HepG2 (cell line): ENCODE measurements at regions of chr10 and their contacts with region 1.

Region 1: DNA sequence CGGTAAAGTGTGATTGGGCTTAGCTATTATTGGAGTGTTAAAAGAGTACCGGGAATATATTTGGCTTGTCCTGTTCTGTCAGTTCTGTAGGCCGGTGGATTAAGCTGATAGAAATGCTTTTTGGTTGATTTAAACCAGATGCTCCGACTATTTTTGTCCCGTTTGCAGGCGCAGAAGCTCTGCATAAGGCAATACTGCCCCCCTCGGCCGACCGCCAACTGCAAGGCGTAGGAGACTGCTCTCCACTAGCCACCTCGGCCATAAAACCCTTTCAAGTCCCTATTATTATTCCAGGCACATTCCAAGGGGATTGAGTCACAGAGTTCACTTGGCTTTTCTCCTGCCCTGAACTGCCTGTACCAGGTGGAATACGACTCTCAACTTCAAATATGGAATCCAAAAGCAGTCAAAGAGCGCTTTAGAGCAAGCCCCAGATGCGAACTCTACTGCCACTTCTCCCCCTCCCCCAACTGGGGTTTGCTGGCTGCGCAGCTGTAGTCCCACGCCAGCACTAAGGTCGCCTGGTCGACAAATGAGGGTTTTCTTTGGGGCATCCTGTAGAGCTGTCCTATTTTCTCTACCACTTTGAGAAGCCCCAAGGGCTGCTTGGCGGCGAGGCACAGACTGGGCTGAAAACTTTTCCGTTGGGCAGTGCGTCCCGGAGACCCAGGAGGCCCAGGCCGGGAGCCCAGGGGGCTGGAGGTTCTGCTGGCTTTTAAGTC is 108.3 kb downstream of the REEP3 start:
- DNase-seq: peak; percentile 76
- ATAC-seq: peak; percentile 89
- H3K4me3 ChIP-seq: peak overlapping the region; percentile 70 to 85 (median 75)
- H3K27ac ChIP-seq: peak overlapping the region; percentile 60
- H3K4me1 ChIP-seq: peaks cover 30% of the 10 kb centered on the region
- H3K27me3 ChIP-seq: no peaks in the 10 kb centered on the region; a peak in 1 of 5 replicates
- CTCF ChIP-seq: peak; percentile 87
- EP300 ChIP-seq: no peak
- POLR2A ChIP-seq: no peak
- RAD21 ChIP-seq: peak; percentile 72

Region 2: DNA sequence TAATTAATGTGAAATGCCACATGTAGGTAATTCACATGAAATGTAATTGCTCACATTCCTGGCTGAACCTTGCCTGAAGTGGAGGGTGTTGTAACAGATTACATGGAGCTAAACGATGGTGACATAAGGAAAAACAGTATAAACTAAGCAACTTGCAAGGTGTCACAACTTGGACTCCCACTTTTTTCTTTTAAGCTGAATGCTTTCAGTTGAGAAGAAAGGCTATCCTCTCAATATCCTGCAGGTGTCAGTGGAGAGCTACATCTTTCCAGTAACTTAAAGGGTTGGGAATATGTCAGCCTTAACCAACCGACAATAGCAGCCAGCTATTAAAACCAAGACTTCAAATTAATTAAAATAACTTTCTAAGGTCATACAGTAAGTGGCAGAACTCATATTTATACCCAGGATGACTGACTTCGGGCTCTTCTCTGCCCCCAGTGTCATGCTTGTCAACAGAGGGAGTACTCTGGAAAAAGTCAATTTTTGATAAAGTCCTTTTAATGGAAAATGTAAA is 462.7 kb before region 1 on chr10:
- CTCF ChIA-PET with region 1: interaction called, 6 read pairs
- POLR2A ChIA-PET with region 1: interaction called, 7 read pairs
- in situ Hi-C with region 1: loop called (anchors 5 kb)
- intact Hi-C with region 1: loop called (anchors 1 kb)
- DNase-seq: peak; percentile 74
- ATAC-seq: peak; percentile 63
- H3K4me3 ChIP-seq: no peak overlapping the region
- H3K27ac ChIP-seq: no peak overlapping the region
- H3K4me1 ChIP-seq: no peaks in the 10 kb centered on the region
- H3K27me3 ChIP-seq: no peaks in the 10 kb centered on the region
- CTCF ChIP-seq: peak; percentile 68
- EP300 ChIP-seq: no peak
- POLR2A ChIP-seq: no peak
- RAD21 ChIP-seq: peak; percentile 36; the same call in 1 of the 2 replicates

Region 3: DNA sequence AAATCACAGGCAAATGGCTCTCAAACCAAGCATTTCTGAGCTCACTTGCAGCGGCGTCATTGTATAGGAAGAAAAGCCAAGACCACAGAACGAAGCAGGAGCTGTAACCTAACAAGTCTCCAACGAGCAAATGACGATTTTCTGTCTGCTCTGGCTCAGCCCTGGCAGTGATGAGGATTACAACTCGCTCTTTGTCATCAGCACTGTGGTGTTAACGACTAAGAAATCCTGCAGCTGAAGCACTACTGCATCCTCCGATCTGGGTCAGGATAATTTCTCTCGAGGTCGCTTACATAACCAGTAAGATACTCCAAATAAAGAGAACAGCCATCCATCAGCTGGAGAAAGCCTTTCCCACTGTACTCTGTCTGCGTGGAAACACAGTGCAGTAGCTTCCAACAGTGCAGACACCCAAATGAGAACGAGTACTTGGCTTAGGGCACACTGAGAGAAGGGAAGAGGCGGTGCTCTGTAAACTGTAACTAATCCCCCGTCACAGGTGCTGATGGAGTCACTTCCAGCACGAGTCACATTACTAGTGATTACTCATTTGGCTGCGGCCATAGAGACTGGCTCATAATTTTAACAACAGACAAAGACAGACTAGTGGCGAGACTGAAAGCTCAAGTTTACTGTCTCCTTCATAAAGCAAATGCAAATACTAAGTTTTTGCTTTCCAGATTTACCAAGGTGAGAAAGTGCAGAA is 360.6 kb before region 1 on chr10:
- CTCF ChIA-PET with region 1: no interaction called
- POLR2A ChIA-PET with region 1: interaction called, 27 read pairs
- in situ Hi-C with region 1: no loop called
- intact Hi-C with region 1: loop called (anchors 2 kb)
- DNase-seq: peak; percentile 92
- ATAC-seq: peak; percentile 95
- H3K4me3 ChIP-seq: peak overlapping the region; percentile 61 to 100 (median 79)
- H3K27ac ChIP-seq: peak overlapping the region; percentile 99
- H3K4me1 ChIP-seq: peaks cover 21% of the 10 kb centered on the region
- H3K27me3 ChIP-seq: no peaks in the 10 kb centered on the region; a peak in 2 of 5 replicates
- CTCF ChIP-seq: no peak
- EP300 ChIP-seq: no peak
- POLR2A ChIP-seq: peak; percentile 84 to 96
- RAD21 ChIP-seq: no peak

Region 4: GRCh38 chr10:63528084-63528747 is 101.3 kb before region 1 on chr10:
- CTCF ChIA-PET with region 1: no interaction called
- POLR2A ChIA-PET with region 1: no interaction called
- in situ Hi-C with region 1: no loop called
- intact Hi-C with region 1: no loop called
- DNase-seq: no peak
- ATAC-seq: no peak
- H3K4me3 ChIP-seq: no peak overlapping the region
- H3K27ac ChIP-seq: no peak overlapping the region
- H3K4me1 ChIP-seq: peaks cover 38% of the 10 kb centered on the region
- H3K27me3 ChIP-seq: no peaks in the 10 kb centered on the region
- CTCF ChIP-seq: no peak
- EP300 ChIP-seq: no peak
- POLR2A ChIP-seq: no peak
- RAD21 ChIP-seq: no peak

Region 5: DNA sequence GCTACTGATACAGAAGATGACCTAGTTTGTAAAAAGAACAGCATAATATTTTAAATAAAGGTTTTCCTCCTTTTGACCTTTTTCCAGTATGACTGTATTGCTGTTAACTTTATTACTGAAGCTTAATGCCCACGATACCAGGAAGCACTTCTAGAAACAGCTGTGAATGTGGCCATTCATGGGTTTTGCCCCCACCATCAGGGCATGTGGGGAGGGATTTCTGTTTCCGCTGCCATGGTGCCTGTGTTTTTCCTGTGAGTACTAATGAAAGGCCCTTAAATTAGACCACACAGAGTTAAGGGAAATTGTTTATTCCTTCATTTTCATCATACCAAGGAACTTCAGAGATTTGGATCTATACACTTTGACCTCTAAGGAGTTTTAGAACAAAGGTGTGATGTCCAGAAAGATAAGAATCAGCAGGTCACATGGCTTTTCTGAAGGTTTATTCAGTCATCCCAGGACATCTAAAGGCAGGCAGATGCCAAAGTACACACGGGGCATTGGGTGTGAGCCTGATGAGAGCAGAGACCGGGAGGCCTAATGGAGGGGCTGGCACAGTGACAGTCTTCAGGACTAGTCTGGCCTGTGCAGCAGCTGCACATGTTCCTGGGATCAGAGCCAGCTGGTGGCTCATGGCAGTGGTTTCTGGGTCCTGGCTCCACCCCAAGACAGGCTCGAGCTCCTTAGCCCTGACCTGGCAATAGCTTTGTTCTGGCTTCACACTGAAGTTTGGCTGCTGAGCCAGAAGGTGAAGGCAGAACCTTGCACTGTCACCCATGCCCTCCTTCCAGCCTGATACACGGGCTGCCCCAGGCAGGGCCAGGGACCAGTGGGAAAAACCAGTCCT is 82.6 kb after region 1 on chr10:
- CTCF ChIA-PET with region 1: no interaction called
- POLR2A ChIA-PET with region 1: no interaction called
- in situ Hi-C with region 1: loop called (anchors 10 kb)
- intact Hi-C with region 1: no loop called
- DNase-seq: peak; percentile 33
- ATAC-seq: peak; percentile 82
- H3K4me3 ChIP-seq: no peak overlapping the region
- H3K27ac ChIP-seq: no peak overlapping the region
- H3K4me1 ChIP-seq: peaks cover 36% of the 10 kb centered on the region
- H3K27me3 ChIP-seq: no peaks in the 10 kb centered on the region; a peak in 2 of 5 replicates
- CTCF ChIP-seq: no peak
- EP300 ChIP-seq: no peak
- POLR2A ChIP-seq: no peak
- RAD21 ChIP-seq: no peak

Region 6: GRCh38 chr10:63767138-63767801 is 137.7 kb after region 1 on chr10:
- CTCF ChIA-PET with region 1: no interaction called
- POLR2A ChIA-PET with region 1: no interaction called
- in situ Hi-C with region 1: no loop called
- intact Hi-C with region 1: loop called (anchors 2 kb)
- DNase-seq: peak; percentile 4
- ATAC-seq: no peak
- H3K4me3 ChIP-seq: no peak overlapping the region
- H3K27ac ChIP-seq: no peak overlapping the region
- H3K4me1 ChIP-seq: peaks cover 15% of the 10 kb centered on the region
- H3K27me3 ChIP-seq: no peaks in the 10 kb centered on the region
- CTCF ChIP-seq: peak; percentile 33
- EP300 ChIP-seq: no peak
- POLR2A ChIP-seq: no peak
- RAD21 ChIP-seq: no peak